ENCODE measurements at regions of chr3 and their contacts with region 1.

Region 1: DNA sequence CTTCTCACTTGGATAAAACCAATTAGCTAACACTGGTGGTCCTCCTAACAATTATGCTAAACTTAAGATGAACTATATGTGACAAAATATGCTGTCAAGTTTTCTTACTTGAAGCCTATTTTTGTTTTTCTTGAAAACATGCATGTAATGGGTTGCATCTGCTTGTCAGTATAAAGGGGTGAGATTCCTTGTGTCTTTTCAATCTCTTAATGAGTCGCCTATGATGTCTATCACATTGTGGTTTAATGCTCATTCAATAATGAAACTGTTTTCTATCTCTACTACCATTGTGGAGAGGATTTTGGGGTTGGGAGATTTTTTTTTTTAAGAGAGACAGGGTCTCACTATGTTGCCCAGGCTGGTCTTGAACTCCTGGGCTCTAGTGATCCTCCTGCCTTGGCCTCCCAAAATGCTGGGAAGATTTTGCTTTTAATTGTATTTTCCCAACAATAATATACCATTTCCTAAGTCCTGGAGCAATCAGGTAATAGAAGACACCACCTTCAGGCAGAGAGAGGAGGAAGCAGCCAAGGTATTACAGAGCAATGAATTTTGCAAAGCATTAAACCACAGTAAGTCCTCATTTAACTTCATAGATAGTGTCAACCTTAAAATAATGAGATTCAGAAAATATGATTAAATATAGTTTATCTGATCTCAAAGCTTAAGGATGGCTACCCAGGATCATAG is 17.4 kb upstream of the TRMT10C start:
- DNase-seq: no peak
- H3K4me3 ChIP-seq: no peak overlapping the region
- H3K4me3 Mint-ChIP-seq: no peak overlapping the region
- H3K27ac Mint-ChIP-seq: no peak overlapping the region
- H3K4me1 ChIP-seq: peaks cover 12% of the 10 kb centered on the region
- H3K4me1 Mint-ChIP-seq: peaks cover 15% of the 10 kb centered on the region
- H3K27me3 ChIP-seq: no peaks in the 10 kb centered on the region
- H3K27me3 Mint-ChIP-seq: no peaks in the 10 kb centered on the region
- CTCF ChIP-seq: peak in 1 of 2 experiments; percentile 4

Region 2: GRCh38 chr3:101512646-101513418 is 31.5 kb before region 1 on chr3 and contains the start of gene SENP7:
- CTCF ChIA-PET with region 1: no interaction called
- POLR2A ChIA-PET with region 1: no interaction called
- intact Hi-C with region 1: loop called (anchors 2 kb)
- DNase-seq: peak; percentile 81 to 82
- H3K4me3 ChIP-seq: peak within 1 kb of the TSS; percentile 54
- H3K4me3 Mint-ChIP-seq: peak within 1 kb of the TSS; percentile 90
- H3K27ac Mint-ChIP-seq: peak within 1 kb of the TSS; percentile 77
- H3K4me1 ChIP-seq: peaks cover 11% of the 10 kb centered on the region
- H3K4me1 Mint-ChIP-seq: peaks cover 6% of the 10 kb centered on the region
- H3K27me3 ChIP-seq: no peaks in the 10 kb centered on the region
- H3K27me3 Mint-ChIP-seq: no peaks in the 10 kb centered on the region
- CTCF ChIP-seq: no peak
- total RNA-seq, gene SENP7: 7.6 and 8.5 TPM in 2 replicates

Region 3: DNA sequence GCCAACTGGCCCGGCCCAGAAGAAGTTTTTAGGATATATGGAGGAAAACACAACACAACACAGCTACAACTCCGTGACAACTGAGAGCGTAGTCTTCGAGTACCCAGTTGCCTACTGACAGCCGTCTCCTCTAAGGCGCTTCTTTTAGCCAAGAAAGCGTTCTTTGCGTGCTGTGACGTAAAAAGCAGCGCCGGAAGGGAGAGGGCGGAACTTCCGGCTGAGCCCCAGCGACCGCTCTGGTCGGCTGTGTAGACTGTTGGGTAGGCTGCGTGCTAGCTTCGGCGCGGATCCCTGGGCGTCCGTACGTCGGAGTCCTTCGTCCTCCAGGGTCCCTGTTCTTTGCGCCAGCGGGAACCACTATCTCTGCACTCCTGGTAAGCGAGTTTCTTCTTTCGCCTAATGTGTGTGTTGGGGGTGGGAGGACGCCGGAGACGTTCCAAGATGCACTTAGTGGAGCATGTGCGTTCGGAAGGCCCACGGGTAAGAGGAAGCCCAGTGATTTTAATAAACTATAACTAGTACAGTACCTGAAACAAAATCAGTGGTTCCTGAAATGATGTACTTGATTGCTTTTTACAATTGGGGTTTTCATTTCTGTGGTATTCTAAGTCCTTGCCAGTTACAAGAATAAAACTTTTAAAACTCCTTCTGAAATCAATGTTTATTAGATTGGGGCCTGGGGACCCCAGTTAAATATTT is 17.5 kb after region 1 on chr3 and contains the start of gene TRMT10C:
- CTCF ChIA-PET with region 1: no interaction called
- POLR2A ChIA-PET with region 1: interaction called, 4 read pairs
- intact Hi-C with region 1: loop called (anchors 1 kb)
- DNase-seq: peak; percentile 91
- H3K4me3 ChIP-seq: peak within 1 kb of the TSS; percentile 91
- H3K4me3 Mint-ChIP-seq: peak within 1 kb of the TSS; percentile 83
- H3K27ac Mint-ChIP-seq: peak within 1 kb of the TSS; percentile 87
- H3K4me1 ChIP-seq: no peaks in the 10 kb centered on the region; the same call in 1 of the 2 replicates
- H3K4me1 Mint-ChIP-seq: no peaks in the 10 kb centered on the region
- H3K27me3 ChIP-seq: no peaks in the 10 kb centered on the region
- H3K27me3 Mint-ChIP-seq: no peaks in the 10 kb centered on the region
- CTCF ChIP-seq: no peak
- total RNA-seq, gene TRMT10C: 25.7 and 28.1 TPM in 2 replicates